Dorsolateral prefrontal cortex (tissue), 120 donors: ENCODE measurements at regions of chr2 and their contacts with region 1.

Region 1: GRCh38 chr2:71510196-71510807 is 56.9 kb downstream of the DYSF start:
- DNase-seq: peak; percentile 65 to 77 (median 71)
- H3K4me3 ChIP-seq: no peak overlapping the region
- H3K27ac ChIP-seq: no peak overlapping the region
- H3K27me3 ChIP-seq: no peaks in the 10 kb centered on the region
- CTCF ChIP-seq: peak; percentile 78 to 99 (median 94)

Region 2: DNA sequence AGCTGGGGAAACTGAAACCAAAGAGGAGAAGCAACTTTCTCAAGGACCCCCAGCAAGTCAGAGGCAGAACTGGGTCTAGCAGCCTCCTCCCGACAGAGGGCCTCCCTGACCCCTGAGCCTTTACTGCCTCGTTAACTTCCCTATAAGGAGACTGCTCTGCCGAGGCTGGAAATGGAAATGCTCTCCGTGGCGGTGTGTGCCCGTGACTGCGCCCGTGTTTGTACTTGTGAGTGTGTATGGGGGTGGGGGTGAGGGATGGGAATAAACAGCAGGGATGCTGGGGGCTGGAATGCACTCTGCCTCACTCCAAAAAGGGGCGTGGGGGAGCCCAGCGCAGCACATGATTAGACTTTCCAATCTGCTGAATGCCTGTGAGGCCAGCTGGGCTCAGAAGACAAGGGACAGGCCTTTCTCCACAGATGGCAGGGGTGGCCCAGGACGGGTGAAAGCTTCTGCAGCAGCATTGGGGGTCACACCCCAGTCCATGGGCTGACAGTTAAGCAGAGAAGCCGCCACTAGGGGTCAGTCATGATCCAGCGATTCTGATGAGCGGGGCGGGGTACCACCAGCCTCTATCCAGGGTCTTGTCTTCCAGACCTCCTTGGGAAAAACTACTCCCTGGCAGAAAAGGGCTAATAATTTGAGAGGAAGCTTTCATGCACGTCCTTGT is 353.0 kb before region 1 on chr2:
- intact Hi-C with region 1: loop called (anchors 2 to 10 kb)
- DNase-seq: peak in 9 of 10 donors; percentile 47 to 77 (median 64)
- H3K4me3 ChIP-seq: peak overlapping the region in 42 of 59 donors; percentile 6 to 54 (median 28)
- H3K27ac ChIP-seq: no peak overlapping the region
- H3K27me3 ChIP-seq: no peaks in the 10 kb centered on the region
- CTCF ChIP-seq: peak; percentile 55 to 85 (median 72)

Region 3: DNA sequence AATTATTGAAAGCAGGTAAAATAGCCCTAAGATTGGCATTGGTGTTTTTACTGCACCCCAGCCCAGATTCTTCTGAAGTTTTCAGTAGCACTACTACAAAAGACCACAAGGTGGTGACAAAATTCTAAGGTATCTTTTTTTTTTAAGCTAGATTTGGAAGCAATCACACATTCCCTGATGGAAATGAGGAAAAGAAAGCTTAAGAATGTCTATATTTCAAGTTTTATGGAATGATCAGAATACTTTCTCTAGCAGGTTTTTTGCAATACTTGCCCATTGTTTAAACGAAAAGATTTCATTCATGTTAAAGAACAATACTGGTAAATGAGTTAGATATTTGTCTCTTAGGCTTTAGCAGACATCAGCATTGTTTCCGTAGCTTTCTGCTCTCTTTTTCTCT is 210.8 kb before region 1 on chr2:
- intact Hi-C with region 1: loop called (anchors 1 to 10 kb)
- DNase-seq: no peak
- H3K4me3 ChIP-seq: no peak overlapping the region
- H3K27ac ChIP-seq: peak overlapping the region in 13 of 59 donors; percentile 7 to 65 (median 33)
- H3K27me3 ChIP-seq: no peaks in the 10 kb centered on the region
- CTCF ChIP-seq: peak; percentile 60 to 90 (median 78)

Region 4: DNA sequence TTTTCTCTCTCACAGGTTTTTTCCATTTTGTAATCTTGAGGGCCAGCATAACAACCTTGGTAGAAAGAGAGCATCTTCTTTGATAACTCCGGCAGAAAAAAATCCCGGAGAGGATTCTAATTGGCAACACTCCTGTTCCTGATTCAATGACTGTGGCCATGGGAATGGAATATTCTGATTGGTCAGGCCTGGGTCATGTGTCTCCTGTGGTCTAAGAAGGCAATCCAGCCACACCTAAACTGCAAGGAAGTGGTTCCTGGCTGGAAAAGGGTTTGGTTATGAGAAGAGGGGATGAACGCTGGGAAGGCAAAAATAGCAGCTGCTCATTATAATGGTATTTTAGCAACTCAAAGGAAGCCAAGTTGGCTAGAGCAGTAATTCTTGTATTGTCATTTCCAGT is 203.5 kb before region 1 on chr2:
- intact Hi-C with region 1: loop called in 1 of 2 experiments (anchors 10 kb)
- DNase-seq: no peak
- H3K4me3 ChIP-seq: no peak overlapping the region
- H3K27ac ChIP-seq: no peak overlapping the region
- H3K27me3 ChIP-seq: no peaks in the 10 kb centered on the region
- CTCF ChIP-seq: no peak

Region 5: DNA sequence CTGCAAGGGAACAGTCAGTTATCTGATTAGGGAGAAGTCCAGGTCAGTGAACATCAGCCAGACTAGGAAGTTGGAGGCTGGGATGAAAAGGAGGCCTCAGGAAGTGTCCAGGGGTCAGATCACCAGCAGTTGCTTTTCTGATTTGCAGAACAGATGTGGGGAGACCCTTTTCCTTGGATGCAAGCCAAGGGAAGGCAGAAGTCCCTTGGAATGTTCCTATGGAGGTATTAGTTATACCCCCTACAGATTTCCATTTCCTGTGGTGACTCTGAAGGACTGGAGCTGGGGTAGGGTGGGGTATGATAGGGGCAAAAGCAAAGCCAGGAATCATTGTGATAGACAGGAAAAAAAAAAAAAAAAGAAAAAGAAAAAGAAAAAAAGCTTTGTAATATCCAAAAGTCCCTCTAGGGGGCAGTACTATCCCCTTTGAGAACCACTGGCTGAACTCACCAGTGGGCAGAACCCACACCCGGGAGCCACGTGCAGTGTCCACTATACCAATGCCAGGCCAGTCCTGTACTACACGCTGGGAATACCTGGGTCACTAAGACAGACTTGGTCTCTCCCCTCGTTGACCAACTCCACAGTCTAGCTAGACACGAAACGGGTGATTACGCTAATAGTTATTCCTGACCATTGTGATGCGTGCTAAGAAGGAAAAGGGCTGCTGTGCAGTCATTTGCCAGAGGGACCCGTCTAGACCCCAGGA is 49.6 kb before region 1 on chr2:
- intact Hi-C with region 1: loop called in 1 of 2 experiments (anchors 5 kb)
- DNase-seq: peak in 1 of 10 donors; percentile 33
- H3K4me3 ChIP-seq: no peak overlapping the region
- H3K27ac ChIP-seq: no peak overlapping the region
- H3K27me3 ChIP-seq: peaks cover 0 to 12% (median 0%) of the 10 kb centered on the region in 45 donors
- CTCF ChIP-seq: peak in 55 of 56 donors; percentile 23 to 76 (median 58)

Region 6: DNA sequence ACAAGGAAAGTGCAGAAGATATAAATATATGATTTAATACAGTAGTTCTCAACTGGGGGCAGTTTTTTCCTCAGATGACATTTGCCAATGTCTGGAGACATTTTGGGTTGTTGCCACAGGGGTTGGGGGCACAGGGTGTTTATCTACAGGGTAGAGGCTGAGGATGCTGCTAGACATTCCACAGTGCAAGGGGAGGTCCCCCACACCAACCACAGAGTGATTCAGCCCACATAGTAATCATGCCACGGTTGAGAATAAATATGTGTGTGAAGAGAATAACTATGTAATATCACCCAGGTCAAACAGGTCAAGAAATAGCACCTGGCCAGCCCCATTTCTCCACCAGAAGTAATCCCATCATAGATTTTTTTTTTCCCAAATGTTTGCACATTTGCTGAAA is 39.0 kb before region 1 on chr2:
- intact Hi-C with region 1: no loop called
- DNase-seq: no peak
- H3K4me3 ChIP-seq: no peak overlapping the region
- H3K27ac ChIP-seq: no peak overlapping the region
- H3K27me3 ChIP-seq: peaks cover 0 to 4% (median 0%) of the 10 kb centered on the region in 45 donors
- CTCF ChIP-seq: no peak